ENCODE measurements at regions of chr17 and their contacts with region 1.

Region 1: GRCh38 chr17:82734987-82735866 is at the start of gene FN3K:
- DNase-seq: peak; percentile 48
- ATAC-seq: peak; percentile 46
- H3K4me3 ChIP-seq: peak within 1 kb of the TSS; percentile 70 to 87 (median 83)
- H3K27ac ChIP-seq: peak within 1 kb of the TSS; percentile 60
- H3K4me1 ChIP-seq: peaks cover 45% of the 10 kb centered on the region
- H3K27me3 ChIP-seq: no peaks in the 10 kb centered on the region
- CTCF ChIP-seq: no peak
- EP300 ChIP-seq: no peak
- POLR2A ChIP-seq: peak; percentile 67 to 91
- RAD21 ChIP-seq: peak; percentile 69
- total RNA-seq, gene FN3K: 12.2 and 22.0 TPM in 2 replicates

Region 2: GRCh38 chr17:82703935-82704865 is 31.0 kb before region 1 on chr17:
- CTCF ChIA-PET with region 1: no interaction called
- POLR2A ChIA-PET with region 1: no interaction called
- in situ Hi-C with region 1: no loop called
- intact Hi-C with region 1: loop called (anchors 1 kb)
- DNase-seq: peak; percentile 69
- ATAC-seq: peak; percentile 68
- H3K4me3 ChIP-seq: peak overlapping the region; percentile 26 to 60 (median 27)
- H3K27ac ChIP-seq: no peak overlapping the region
- H3K4me1 ChIP-seq: peaks cover 63% of the 10 kb centered on the region
- H3K27me3 ChIP-seq: peaks cover 0 to 22% of the 10 kb centered on the region in 2 experiments; a peak in 2 of 5 replicates
- CTCF ChIP-seq: 0 out of 2 replicates have a peak, but pooled peaks have one; percentile 6
- EP300 ChIP-seq: no peak
- POLR2A ChIP-seq: no peak
- RAD21 ChIP-seq: no peak

Region 3: GRCh38 chr17:82716203-82717010 is 18.8 kb before region 1 on chr17 and contains the start of gene FN3KRP:
- CTCF ChIA-PET with region 1: no interaction called
- POLR2A ChIA-PET with region 1: interaction called, 25 read pairs
- in situ Hi-C with region 1: no loop called
- intact Hi-C with region 1: loop called (anchors 2 kb)
- DNase-seq: peak; percentile 92
- ATAC-seq: peak; percentile 78
- H3K4me3 ChIP-seq: peak within 1 kb of the TSS; percentile 73 to 91 (median 74)
- H3K27ac ChIP-seq: peak within 1 kb of the TSS; percentile 72
- H3K4me1 ChIP-seq: peaks cover 50% of the 10 kb centered on the region
- H3K27me3 ChIP-seq: no peaks in the 10 kb centered on the region
- CTCF ChIP-seq: no peak
- EP300 ChIP-seq: no peak
- POLR2A ChIP-seq: peak; percentile 69 to 76
- RAD21 ChIP-seq: no peak
- total RNA-seq, gene FN3KRP: 28.2 and 36.1 TPM in 2 replicates

Region 4: GRCh38 chr17:82751571-82752370 is 16.5 kb after region 1 on chr17 and contains the start of gene TBCD:
- CTCF ChIA-PET with region 1: no interaction called
- POLR2A ChIA-PET with region 1: interaction called, 6 read pairs
- in situ Hi-C with region 1: no loop called
- intact Hi-C with region 1: loop called (anchors 1 kb)
- DNase-seq: peak; percentile 71
- ATAC-seq: peak; percentile 83
- H3K4me3 ChIP-seq: peak within 1 kb of the TSS; percentile 73 to 98 (median 95)
- H3K27ac ChIP-seq: peak within 1 kb of the TSS; percentile 84
- H3K4me1 ChIP-seq: peaks cover 22% of the 10 kb centered on the region
- H3K27me3 ChIP-seq: no peaks in the 10 kb centered on the region; a peak in 1 of 5 replicates
- CTCF ChIP-seq: peak; percentile 25
- EP300 ChIP-seq: peak in 1 of 2 experiments; percentile 17; a peak in 1 of 4 replicates
- POLR2A ChIP-seq: no peak
- RAD21 ChIP-seq: peak; percentile 74
- total RNA-seq, gene TBCD: 33.9 and 49.6 TPM in 2 replicates

Region 5: GRCh38 chr17:82767041-82767754 is 32.0 kb after region 1 on chr17:
- CTCF ChIA-PET with region 1: interaction called, 4 read pairs
- POLR2A ChIA-PET with region 1: interaction called, 5 read pairs
- in situ Hi-C with region 1: no loop called
- intact Hi-C with region 1: loop called (anchors 2 kb)
- DNase-seq: peak; percentile 49
- ATAC-seq: peak; percentile 81
- H3K4me3 ChIP-seq: no peak overlapping the region
- H3K27ac ChIP-seq: no peak overlapping the region
- H3K4me1 ChIP-seq: no peaks in the 10 kb centered on the region
- H3K27me3 ChIP-seq: no peaks in the 10 kb centered on the region
- CTCF ChIP-seq: peak; percentile 85
- EP300 ChIP-seq: no peak
- POLR2A ChIP-seq: no peak
- RAD21 ChIP-seq: peak; percentile 90

Region 6: DNA sequence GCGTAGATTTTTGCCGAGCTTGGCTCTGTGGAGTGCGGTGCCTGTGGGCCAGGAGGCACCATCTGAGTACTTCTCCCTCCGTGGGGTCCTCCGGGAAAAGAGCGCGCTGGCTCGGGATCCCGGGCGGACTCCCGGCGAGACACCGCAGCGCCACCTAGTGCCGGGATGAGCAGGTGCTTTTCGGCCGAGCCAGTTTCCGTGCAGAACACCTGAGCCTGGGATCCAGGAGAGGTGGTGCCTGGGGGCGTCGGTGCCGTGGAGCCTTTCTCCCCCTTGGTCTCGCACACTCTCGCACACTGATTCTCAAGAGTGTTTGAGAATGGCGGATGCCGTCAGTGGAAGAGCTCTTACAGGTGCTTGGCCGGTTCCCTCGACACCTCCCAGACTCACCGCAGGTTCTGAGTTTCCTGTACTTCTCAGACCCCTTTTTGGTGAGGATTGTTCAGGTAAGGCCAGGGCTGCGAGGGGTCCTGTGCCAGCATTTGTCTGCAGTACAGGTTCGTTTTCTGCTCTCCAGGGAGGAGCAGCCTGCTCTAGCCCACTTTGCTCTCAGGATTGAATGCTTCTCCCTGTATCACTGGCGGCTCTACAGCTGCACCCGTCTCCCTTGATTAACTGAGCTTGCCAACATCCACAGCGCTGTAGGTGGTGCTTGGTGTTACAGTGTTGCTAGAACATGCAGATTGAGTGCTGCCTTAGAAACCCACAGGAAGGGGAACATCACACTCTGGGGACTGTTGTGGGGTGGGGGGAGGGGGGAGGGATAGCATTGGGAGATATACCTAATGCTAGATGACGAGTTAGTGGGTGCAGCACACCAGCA is 40.0 kb after region 1 on chr17:
- CTCF ChIA-PET with region 1: no interaction called
- POLR2A ChIA-PET with region 1: no interaction called
- in situ Hi-C with region 1: no loop called
- intact Hi-C with region 1: loop called (anchors 2 kb)
- DNase-seq: peak; percentile 51
- ATAC-seq: peak; percentile 85
- H3K4me3 ChIP-seq: no peak overlapping the region
- H3K27ac ChIP-seq: no peak overlapping the region
- H3K4me1 ChIP-seq: peaks cover 5% of the 10 kb centered on the region
- H3K27me3 ChIP-seq: no peaks in the 10 kb centered on the region
- CTCF ChIP-seq: peak; percentile 99
- EP300 ChIP-seq: no peak
- POLR2A ChIP-seq: no peak
- RAD21 ChIP-seq: peak; percentile 88